Vagina (tissue), 2 donors: ENCODE measurements at regions of chr18 and their contacts with region 1.

Region 1: GRCh38 chr18:76492669-76493212 is 2.3 kb downstream of the ZNF516 start:
- DNase-seq: peak in 1 of 2 donors; percentile 98
- H3K4me3 ChIP-seq: peak overlapping the region; percentile 79 to 99
- H3K27ac ChIP-seq: peak overlapping the region; percentile 97
- H3K4me1 ChIP-seq: peaks cover 30% of the 10 kb centered on the region
- H3K27me3 ChIP-seq: no peaks in the 10 kb centered on the region
- CTCF ChIP-seq: no peak
- POLR2A ChIP-seq: peak in 1 of 2 donors; percentile 63

Region 2: GRCh38 chr18:76410660-76411417 is 81.9 kb before region 1 on chr18:
- intact Hi-C with region 1: loop called (anchors 10 kb)
- DNase-seq: peak in 1 of 2 donors; percentile 81
- H3K4me3 ChIP-seq: peak overlapping the region in 1 of 2 donors; percentile 1
- H3K27ac ChIP-seq: peak overlapping the region; percentile 80
- H3K4me1 ChIP-seq: peaks cover 92% of the 10 kb centered on the region
- H3K27me3 ChIP-seq: no peaks in the 10 kb centered on the region
- CTCF ChIP-seq: no peak
- POLR2A ChIP-seq: no peak

Region 3: GRCh38 chr18:76450452-76451395 is 42.0 kb before region 1 on chr18:
- intact Hi-C with region 1: loop called (anchors 5 kb)
- DNase-seq: peak; percentile 85 to 96
- H3K4me3 ChIP-seq: peak overlapping the region; percentile 48 to 59
- H3K27ac ChIP-seq: peak overlapping the region; percentile 88
- H3K4me1 ChIP-seq: peaks cover 97% of the 10 kb centered on the region
- H3K27me3 ChIP-seq: no peaks in the 10 kb centered on the region
- CTCF ChIP-seq: no peak
- POLR2A ChIP-seq: no peak